GM10248 (cell line): ENCODE measurements at regions of chr2 and their contacts with region 1.

Region 1: DNA sequence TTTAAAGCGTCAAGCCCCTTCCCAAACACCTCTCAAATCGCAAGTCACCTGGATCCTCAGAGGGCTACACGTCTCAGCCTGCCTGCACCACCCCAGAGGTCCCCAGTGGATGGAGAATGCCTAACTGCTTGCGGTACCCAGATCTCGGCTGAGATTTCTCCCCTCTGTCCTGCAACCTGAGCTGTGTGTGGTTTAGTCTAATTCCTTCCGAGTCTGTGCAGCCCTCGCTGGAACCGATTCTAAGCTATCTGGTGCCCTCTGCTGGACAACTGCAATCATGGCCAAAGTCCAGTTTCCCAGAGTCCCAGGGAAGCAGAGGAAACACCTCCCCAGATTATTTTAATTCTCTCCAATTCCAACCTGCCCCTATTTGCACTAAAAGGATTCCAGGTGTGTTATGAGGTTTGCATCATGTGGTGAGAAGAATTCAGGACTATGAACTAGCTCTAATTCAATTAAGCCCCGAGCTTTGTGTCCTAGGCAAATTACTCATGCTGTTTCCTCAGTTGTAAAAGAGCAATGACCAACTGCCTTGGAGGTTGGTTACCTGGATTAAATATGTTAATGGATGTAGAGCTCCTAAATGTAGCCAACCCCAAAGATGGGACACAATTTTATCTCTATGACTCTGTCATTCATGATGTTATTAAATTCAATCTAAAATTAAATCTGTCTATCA is 276.1 kb upstream of the NCKAP5 start:
- DNase-seq: peak; percentile 77
- CTCF ChIP-seq: peak; percentile 92

Region 2: DNA sequence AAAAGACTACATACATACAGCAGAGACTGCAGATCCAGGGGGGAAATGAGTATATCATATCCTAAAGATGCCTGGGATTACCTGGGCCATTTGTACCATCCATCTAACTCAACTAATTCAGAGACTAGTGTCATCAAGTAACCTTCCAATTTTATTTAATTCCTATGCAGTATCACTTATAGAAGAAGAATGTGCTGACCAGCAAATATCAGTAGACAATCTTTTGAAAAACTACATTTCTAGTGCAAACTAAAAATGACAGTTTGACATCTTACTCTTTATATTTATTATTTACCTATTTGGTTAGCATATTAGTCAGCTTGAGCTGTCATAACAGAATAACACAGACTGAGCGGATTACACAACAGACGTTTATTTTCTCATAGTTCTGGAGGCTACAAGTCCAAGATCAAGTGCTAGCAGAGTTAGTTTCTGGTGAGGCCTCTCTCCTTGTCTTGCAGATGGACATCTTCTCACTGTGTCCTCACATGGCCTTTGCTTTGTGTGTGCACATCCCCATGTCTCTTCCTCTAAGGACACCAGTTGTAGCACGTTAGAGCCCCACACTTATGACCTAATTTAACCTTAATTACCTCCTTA is 323.1 kb before region 1 on chr2:
- CTCF ChIA-PET with region 1: interaction called, 11 read pairs
- POLR2A ChIA-PET with region 1: no interaction called
- DNase-seq: no peak
- CTCF ChIP-seq: no peak

Region 3: GRCh38 chr2:133855526-133855925 is 11.2 kb after region 1 on chr2:
- CTCF ChIA-PET with region 1: interaction called, 28 read pairs
- POLR2A ChIA-PET with region 1: no interaction called
- DNase-seq: no peak
- CTCF ChIP-seq: no peak

Region 4: DNA sequence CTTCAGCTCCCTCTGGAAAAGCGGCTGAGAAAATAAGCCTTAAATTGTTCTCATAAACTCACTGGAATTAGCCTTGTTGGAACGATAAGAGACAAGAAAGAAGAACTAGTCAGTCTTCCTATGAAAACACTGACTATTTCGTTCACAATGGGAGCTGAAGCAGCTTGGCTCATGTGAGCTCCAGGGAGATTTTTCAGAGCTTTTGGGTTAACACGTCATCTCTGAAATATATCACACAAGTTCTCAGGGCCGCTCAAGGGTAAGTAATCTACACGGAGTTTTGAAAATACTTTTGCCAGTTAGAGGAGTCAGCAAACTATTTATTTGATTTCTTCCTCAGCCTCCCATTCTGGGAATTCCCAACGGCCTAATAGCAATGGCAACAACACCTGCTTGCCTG is 93.3 kb after region 1 on chr2:
- CTCF ChIA-PET with region 1: no interaction called
- POLR2A ChIA-PET with region 1: no interaction called
- DNase-seq: no peak
- CTCF ChIP-seq: no peak